ENCODE measurements at regions of chr16 and their contacts with region 1.

Region 1: GRCh38 chr16:81006814-81007696 is at the starts of genes CENPN and CMC2:
- DNase-seq: peak; percentile 95 to 99 (median 98)
- ATAC-seq: peak; percentile 78
- H3K4me3 ChIP-seq: peak within 1 kb of the TSS; percentile 86
- H3K4me3 Mint-ChIP-seq: peak within 1 kb of the TSS; percentile 99
- H3K27ac ChIP-seq: peak within 1 kb of the TSS; percentile 93 to 99
- H3K27ac Mint-ChIP-seq: peak within 1 kb of the TSS; percentile 100
- H3K4me1 ChIP-seq: peaks cover 22% of the 10 kb centered on the region
- H3K4me1 Mint-ChIP-seq: peaks cover 38% of the 10 kb centered on the region
- H3K27me3 ChIP-seq: no peaks in the 10 kb centered on the region
- H3K27me3 Mint-ChIP-seq: no peaks in the 10 kb centered on the region
- CTCF ChIP-seq: no peak
- total RNA-seq, gene CENPN: 16.0 to 16.9 TPM
- total RNA-seq, gene CMC2: 84.0 to 86.3 TPM

Region 2: DNA sequence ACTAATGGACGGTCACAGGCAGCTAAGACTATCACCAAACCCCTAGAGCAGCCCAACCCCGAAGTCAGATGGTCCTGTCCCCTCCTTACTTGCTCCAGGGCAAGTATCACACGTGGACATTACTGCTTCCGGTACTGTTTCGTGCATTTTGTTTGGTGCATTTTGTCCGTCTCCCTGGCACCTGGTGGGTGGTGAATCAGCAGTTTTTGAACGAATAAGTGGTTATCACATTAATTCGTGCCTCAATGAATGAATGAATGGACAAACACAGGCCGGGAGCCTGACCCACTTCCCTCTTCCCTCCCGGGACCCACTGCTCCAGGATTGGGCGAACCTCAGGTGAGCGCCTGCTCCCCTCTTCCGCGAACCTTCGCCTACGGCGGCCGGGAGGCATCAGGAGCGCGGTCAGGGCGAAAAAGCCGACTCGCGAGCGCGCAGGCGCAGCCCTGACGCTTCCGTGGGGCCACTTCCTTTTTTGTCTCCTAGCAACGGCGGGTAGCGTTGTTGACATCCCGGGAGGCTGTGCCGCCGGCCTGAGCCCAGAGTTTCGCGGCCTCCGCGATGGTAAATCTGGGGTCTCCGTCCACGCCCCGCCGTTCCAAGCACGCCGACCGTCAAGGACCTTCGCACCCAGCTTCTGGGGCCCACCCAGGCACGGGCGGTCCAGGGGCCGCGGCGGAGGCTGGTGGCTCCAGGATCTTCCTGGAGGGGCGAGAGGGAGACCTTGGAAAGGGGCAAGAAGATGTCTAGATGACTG is 466.4 kb before region 1 on chr16 and contains the start of gene DYNLRB2:
- CTCF ChIA-PET with region 1: no interaction called
- POLR2A ChIA-PET with region 1: no interaction called
- intact Hi-C with region 1: loop called in 1 of 2 experiments (anchors 10 kb)
- DNase-seq: peak; percentile 84 to 97 (median 89)
- ATAC-seq: peak; percentile 89
- H3K4me3 ChIP-seq: peak within 1 kb of the TSS; percentile 69 to 78
- H3K4me3 Mint-ChIP-seq: peak within 1 kb of the TSS; percentile 95
- H3K27ac ChIP-seq: peak within 1 kb of the TSS; percentile 73 to 80
- H3K27ac Mint-ChIP-seq: peak within 1 kb of the TSS; percentile 95
- H3K4me1 ChIP-seq: peaks cover 9% of the 10 kb centered on the region
- H3K4me1 Mint-ChIP-seq: peaks cover 18% of the 10 kb centered on the region
- H3K27me3 ChIP-seq: no peaks in the 10 kb centered on the region
- H3K27me3 Mint-ChIP-seq: peaks cover 8% of the 10 kb centered on the region
- CTCF ChIP-seq: no peak
- total RNA-seq, gene DYNLRB2: not detected

Region 3: GRCh38 chr16:81061871-81062608 is 55.0 kb after region 1 on chr16:
- CTCF ChIA-PET with region 1: no interaction called
- POLR2A ChIA-PET with region 1: no interaction called
- intact Hi-C with region 1: no loop called
- DNase-seq: no peak
- ATAC-seq: no peak
- H3K4me3 ChIP-seq: no peak overlapping the region
- H3K4me3 Mint-ChIP-seq: no peak overlapping the region
- H3K27ac ChIP-seq: no peak overlapping the region
- H3K27ac Mint-ChIP-seq: no peak overlapping the region
- H3K4me1 ChIP-seq: peaks cover 5% of the 10 kb centered on the region
- H3K4me1 Mint-ChIP-seq: peaks cover 5% of the 10 kb centered on the region
- H3K27me3 ChIP-seq: no peaks in the 10 kb centered on the region
- H3K27me3 Mint-ChIP-seq: no peaks in the 10 kb centered on the region
- CTCF ChIP-seq: no peak

Region 4: DNA sequence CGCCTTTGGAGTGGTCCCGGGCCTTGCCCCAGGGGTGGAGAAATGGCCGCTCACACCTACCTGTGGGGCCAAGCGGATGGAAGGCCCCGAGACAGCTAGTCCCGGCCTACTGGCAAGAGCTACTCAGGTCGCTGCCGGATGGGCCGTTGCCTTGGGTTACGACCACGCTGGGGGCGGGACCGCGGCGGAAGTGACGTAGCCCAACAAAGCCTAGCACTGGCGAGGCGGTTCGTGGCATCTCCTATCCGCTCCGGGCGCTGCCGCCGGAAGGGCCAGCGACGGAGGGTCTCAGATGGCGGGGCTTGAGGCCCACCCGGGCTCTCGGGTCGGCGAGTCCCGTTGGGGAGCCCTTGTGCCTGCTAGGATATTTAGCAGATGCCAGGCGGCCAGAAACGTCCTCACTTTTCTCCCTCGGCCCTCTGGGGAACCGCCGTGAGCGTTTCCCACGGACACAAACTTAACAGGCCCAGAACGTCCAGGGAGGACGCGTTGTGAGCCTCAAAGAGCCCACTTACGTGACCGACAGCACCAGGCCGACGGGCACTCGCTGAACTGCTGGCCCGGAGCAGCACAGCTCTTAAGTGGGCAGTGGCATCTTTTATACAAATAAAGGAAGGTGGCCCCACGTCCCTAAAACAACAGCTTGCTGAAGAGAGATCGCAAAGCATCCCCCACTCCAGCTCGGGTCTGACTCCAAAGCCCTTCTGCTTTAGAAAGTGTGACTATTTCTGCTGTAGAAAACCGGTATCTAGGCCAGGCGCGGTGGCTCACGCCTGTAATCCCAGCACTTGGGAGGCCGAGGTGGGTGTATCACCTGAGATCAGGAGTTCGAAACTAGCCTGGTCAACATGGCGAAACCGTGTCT is 70.3 kb after region 1 on chr16 and contains the start of gene C16orf46:
- CTCF ChIA-PET with region 1: interaction called, 14 read pairs
- POLR2A ChIA-PET with region 1: interaction called, 13 read pairs
- intact Hi-C with region 1: loop called (anchors 1 kb)
- DNase-seq: peak; percentile 95 to 100 (median 96)
- ATAC-seq: peak; percentile 69
- H3K4me3 ChIP-seq: peak within 1 kb of the TSS; percentile 80 to 92
- H3K4me3 Mint-ChIP-seq: no peak within 1 kb of the TSS
- H3K27ac ChIP-seq: peak within 1 kb of the TSS; percentile 93 to 97
- H3K27ac Mint-ChIP-seq: no peak within 1 kb of the TSS
- H3K4me1 ChIP-seq: peaks cover 11% of the 10 kb centered on the region
- H3K4me1 Mint-ChIP-seq: peaks cover 4% of the 10 kb centered on the region
- H3K27me3 ChIP-seq: no peaks in the 10 kb centered on the region
- H3K27me3 Mint-ChIP-seq: no peaks in the 10 kb centered on the region
- CTCF ChIP-seq: no peak
- total RNA-seq, gene C16orf46: 0.47 to 0.76 TPM

Region 5: GRCh38 chr16:81314603-81315270 is 307.7 kb after region 1 on chr16 and contains the start of gene GAN:
- CTCF ChIA-PET with region 1: interaction called, 4 read pairs
- POLR2A ChIA-PET with region 1: no interaction called
- intact Hi-C with region 1: loop called in 1 of 2 experiments (anchors 2 kb)
- DNase-seq: peak; percentile 86 to 97 (median 93)
- ATAC-seq: peak; percentile 96
- H3K4me3 ChIP-seq: peak within 1 kb of the TSS; percentile 77 to 87
- H3K4me3 Mint-ChIP-seq: peak within 1 kb of the TSS; percentile 95
- H3K27ac ChIP-seq: peak within 1 kb of the TSS; percentile 59 to 68
- H3K27ac Mint-ChIP-seq: peak within 1 kb of the TSS; percentile 93
- H3K4me1 ChIP-seq: peaks cover 18% of the 10 kb centered on the region
- H3K4me1 Mint-ChIP-seq: peaks cover 59% of the 10 kb centered on the region
- H3K27me3 ChIP-seq: no peaks in the 10 kb centered on the region
- H3K27me3 Mint-ChIP-seq: no peaks in the 10 kb centered on the region
- CTCF ChIP-seq: no peak
- total RNA-seq, gene GAN: 8.7 to 9.4 TPM

Region 6: GRCh38 chr16:81737885-81738786 is 731.1 kb after region 1 on chr16:
- CTCF ChIA-PET with region 1: interaction called, 5 read pairs
- POLR2A ChIA-PET with region 1: no interaction called
- intact Hi-C with region 1: loop called (anchors 1 kb)
- DNase-seq: peak; percentile 69 to 92 (median 87)
- ATAC-seq: peak; percentile 96
- H3K4me3 ChIP-seq: peak overlapping the region; percentile 22 to 24
- H3K4me3 Mint-ChIP-seq: peak overlapping the region; percentile 76
- H3K27ac ChIP-seq: no peak overlapping the region
- H3K27ac Mint-ChIP-seq: no peak overlapping the region
- H3K4me1 ChIP-seq: peaks cover 6% of the 10 kb centered on the region
- H3K4me1 Mint-ChIP-seq: peaks cover 6% of the 10 kb centered on the region
- H3K27me3 ChIP-seq: no peaks in the 10 kb centered on the region
- H3K27me3 Mint-ChIP-seq: no peaks in the 10 kb centered on the region
- CTCF ChIP-seq: peak; percentile 85

Measured in CD8-positive, alpha-beta T cell (primary cell).